Activated CD4-positive, alpha-beta T cell treated with anti-CD3 and anti-CD28 coated beads for 36 hours (primary cell): ENCODE measurements at regions of chr12 and their contacts with region 1.

Region 1: GRCh38 chr12:92065018-92065499 is 80.6 kb downstream of the BTG1 start:
- DNase-seq: peak; percentile 71
- ATAC-seq: peak; percentile 76
- H3K4me3 Mint-ChIP-seq: peak overlapping the region; percentile 30
- H3K27ac Mint-ChIP-seq: peak overlapping the region; percentile 89
- H3K4me1 Mint-ChIP-seq: peaks cover 57% of the 10 kb centered on the region
- H3K27me3 Mint-ChIP-seq: no peaks in the 10 kb centered on the region

Region 2: DNA sequence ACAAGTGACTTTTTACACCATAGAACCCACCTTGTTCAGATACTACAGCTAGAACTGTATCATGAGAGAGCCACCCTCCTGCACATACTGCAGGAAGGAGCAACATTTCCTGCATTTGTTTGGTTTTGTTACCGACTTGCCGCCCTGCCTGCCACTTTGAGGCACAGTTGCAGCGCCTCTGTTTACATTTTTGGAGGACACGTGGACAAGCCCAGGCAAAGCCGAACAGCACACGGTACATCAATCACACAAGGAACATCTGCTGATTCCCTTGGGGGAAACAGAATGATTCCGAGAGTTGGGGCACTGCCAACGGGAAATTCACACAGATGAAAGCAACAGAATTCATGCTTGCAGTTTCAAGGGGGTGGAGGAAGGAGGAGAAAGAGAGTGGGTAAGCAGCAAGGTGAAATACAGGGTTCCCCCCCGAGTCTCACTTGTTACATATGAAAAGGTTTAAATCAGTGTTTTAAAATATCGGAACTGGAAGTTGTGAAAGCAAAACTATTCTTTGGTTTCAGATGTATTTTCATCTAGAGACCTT is 30.1 kb before region 1 on chr12:
- CTCF ChIA-PET with region 1: no interaction called
- POLR2A ChIA-PET with region 1: no interaction called
- intact Hi-C with region 1: loop called in 1 of 2 experiments (anchors 2 kb)
- DNase-seq: peak; percentile 55
- ATAC-seq: peak; percentile 48
- H3K4me3 Mint-ChIP-seq: peak overlapping the region; percentile 72
- H3K27ac Mint-ChIP-seq: peak overlapping the region; percentile 92
- H3K4me1 Mint-ChIP-seq: peaks cover 83% of the 10 kb centered on the region
- H3K27me3 Mint-ChIP-seq: no peaks in the 10 kb centered on the region

Region 3: DNA sequence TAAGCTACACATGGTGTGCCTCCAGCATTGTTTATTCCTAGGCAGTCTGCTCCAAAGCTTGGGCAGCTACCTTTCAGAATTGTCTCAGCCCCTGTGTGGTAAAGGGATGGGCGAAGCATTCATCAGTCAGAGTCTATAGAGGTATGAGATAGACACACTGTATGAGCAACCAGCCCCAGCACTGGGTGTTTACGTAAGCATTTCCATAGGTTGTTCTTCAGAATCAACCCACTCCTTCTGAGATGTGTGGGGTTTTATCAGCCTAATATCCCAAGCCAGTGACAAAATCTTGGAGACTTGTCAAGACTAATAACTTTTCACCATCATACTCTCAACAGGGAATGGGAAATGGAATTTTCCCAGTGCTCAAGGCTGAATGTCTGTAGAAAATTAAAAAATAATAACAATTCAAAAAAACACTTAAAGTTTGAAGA is 17.6 kb before region 1 on chr12:
- CTCF ChIA-PET with region 1: interaction called, 3 read pairs
- POLR2A ChIA-PET with region 1: no interaction called
- intact Hi-C with region 1: loop called (anchors 1 to 2 kb)
- DNase-seq: peak; percentile 54
- ATAC-seq: peak; percentile 80
- H3K4me3 Mint-ChIP-seq: peak overlapping the region; percentile 41
- H3K27ac Mint-ChIP-seq: peak overlapping the region; percentile 86
- H3K4me1 Mint-ChIP-seq: peaks cover 85% of the 10 kb centered on the region
- H3K27me3 Mint-ChIP-seq: no peaks in the 10 kb centered on the region

Region 4: GRCh38 chr12:92078167-92079053 is 13.4 kb after region 1 on chr12:
- CTCF ChIA-PET with region 1: interaction called, 5 read pairs
- POLR2A ChIA-PET with region 1: no interaction called
- intact Hi-C with region 1: loop called (anchors 1 kb)
- DNase-seq: peak; percentile 38
- ATAC-seq: peak; percentile 87
- H3K4me3 Mint-ChIP-seq: no peak overlapping the region
- H3K27ac Mint-ChIP-seq: peak overlapping the region; percentile 87
- H3K4me1 Mint-ChIP-seq: peaks cover 79% of the 10 kb centered on the region
- H3K27me3 Mint-ChIP-seq: no peaks in the 10 kb centered on the region

Region 5: DNA sequence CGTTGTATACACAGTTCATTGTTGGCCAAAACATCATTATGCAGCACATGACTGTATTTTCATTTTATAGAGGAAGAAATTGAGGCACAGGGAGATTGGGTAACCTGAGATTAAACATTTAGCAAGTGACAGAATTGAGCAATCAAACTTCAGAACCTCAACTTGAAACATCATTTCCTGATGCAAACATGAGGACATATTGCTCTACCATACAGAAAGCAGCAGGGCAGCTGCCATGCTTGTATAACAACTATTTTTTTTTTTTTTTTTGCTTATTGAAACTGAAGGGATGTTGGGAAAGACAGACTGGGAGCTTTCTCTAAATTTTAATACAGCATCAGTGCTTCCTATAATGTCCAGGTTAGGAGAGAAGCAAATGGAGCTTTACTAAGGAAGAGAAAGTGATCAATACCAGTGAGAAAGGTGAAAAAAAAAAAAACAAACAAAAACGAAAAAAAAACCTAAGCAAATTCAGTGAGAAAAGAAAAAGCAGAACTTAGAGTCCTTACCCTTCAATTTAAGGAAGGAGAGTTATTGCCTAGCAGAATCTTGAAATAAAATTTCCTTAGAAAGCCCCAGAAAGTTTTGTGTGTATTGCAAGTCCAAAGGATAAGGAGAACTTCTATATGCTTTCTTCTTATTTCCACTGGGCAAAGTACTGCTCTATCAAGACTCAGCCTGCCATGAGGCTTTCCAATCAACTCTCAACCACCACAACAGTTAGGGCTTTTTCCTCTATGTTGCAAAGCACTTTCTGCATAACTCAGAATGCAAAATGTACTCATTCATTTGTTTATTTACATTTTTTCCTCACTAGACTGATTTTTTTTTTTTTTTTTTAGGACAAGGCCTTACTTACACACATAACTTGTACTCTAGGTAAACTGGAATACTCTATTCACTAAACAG is 59.0 kb after region 1 on chr12:
- CTCF ChIA-PET with region 1: no interaction called
- POLR2A ChIA-PET with region 1: no interaction called
- intact Hi-C with region 1: no loop called
- DNase-seq: no peak
- ATAC-seq: peak; percentile 45
- H3K4me3 Mint-ChIP-seq: peak overlapping the region; percentile 27
- H3K27ac Mint-ChIP-seq: peak overlapping the region; percentile 90
- H3K4me1 Mint-ChIP-seq: peaks cover 67% of the 10 kb centered on the region
- H3K27me3 Mint-ChIP-seq: no peaks in the 10 kb centered on the region

Region 6: GRCh38 chr12:92208613-92209121 is 143.6 kb after region 1 on chr12:
- CTCF ChIA-PET with region 1: no interaction called
- POLR2A ChIA-PET with region 1: no interaction called
- intact Hi-C with region 1: loop called in 1 of 2 experiments (anchors 10 kb)
- DNase-seq: peak; percentile 40
- ATAC-seq: peak; percentile 77
- H3K4me3 Mint-ChIP-seq: peak overlapping the region; percentile 67
- H3K27ac Mint-ChIP-seq: peak overlapping the region; percentile 81
- H3K4me1 Mint-ChIP-seq: peaks cover 32% of the 10 kb centered on the region
- H3K27me3 Mint-ChIP-seq: no peaks in the 10 kb centered on the region

Region 7: DNA sequence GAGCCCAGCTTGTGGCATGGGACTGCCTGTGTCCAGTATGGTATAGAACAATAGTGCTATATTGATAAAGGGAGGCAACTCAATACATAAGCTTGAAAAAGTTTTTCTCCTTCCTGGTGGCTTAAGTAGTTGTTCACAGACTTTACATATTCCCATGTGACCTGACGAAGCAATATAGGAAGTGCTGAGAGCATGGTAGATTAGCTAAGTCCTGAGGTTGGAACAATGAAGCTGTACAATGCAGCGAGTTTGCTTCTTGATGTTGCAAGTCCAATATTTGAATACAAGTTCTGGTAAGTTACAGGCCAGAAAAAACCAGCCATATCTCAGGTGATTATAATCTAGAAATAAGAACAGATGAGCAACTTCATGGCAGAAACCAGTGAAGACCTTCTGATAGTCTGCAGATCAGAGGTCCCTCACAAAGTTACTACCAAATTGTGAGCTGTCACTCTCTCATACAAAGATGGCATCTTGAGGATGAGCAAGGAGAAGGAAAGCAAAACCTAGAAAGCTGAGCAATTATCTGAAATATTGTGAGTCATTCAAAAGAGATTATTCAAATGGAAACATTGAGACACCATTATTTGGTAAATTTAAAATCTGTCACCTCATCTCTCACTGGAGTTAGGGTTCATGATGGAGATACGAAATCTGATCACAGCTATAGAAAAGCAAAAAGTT is 153.5 kb after region 1 on chr12:
- CTCF ChIA-PET with region 1: no interaction called
- POLR2A ChIA-PET with region 1: no interaction called
- intact Hi-C with region 1: loop called (anchors 1 to 10 kb)
- DNase-seq: no peak
- ATAC-seq: peak; percentile 96
- H3K4me3 Mint-ChIP-seq: peak overlapping the region; percentile 20
- H3K27ac Mint-ChIP-seq: peak overlapping the region; percentile 84
- H3K4me1 Mint-ChIP-seq: peaks cover 24% of the 10 kb centered on the region
- H3K27me3 Mint-ChIP-seq: no peaks in the 10 kb centered on the region

Region 8: DNA sequence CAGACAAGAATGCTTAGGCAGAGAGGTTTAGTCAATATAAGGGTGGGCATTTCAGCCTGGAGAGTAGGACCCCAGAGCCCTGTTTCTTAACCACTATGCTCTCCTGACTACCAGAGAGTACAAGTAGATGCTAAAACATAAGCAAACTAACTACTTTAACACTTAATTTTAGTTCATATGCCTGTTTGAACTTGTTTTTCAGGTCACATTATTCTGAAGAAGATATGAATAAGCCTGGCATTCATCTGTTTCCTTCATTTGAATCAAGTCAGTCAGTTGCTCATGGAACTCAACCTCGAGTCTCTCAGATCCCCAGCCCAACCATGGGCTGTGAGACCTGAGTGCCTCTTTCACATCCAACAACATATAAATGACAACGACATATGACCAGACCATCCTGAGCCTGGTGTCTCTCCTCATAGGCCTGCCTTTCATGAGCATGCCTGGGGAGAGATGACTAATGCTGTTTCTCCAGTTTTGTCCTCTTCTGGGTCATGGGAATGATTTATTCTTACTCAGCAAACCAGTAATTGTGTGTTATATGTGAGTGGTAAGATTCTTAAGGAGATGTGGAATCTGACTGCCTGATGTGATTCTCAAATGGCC is 331.7 kb after region 1 on chr12:
- CTCF ChIA-PET with region 1: no interaction called
- POLR2A ChIA-PET with region 1: no interaction called
- intact Hi-C with region 1: loop called in 1 of 2 experiments (anchors 5 kb)
- DNase-seq: peak; percentile 46
- ATAC-seq: peak; percentile 44
- H3K4me3 Mint-ChIP-seq: no peak overlapping the region
- H3K27ac Mint-ChIP-seq: peak overlapping the region; percentile 95
- H3K4me1 Mint-ChIP-seq: peaks cover 93% of the 10 kb centered on the region
- H3K27me3 Mint-ChIP-seq: no peaks in the 10 kb centered on the region

Region 9: DNA sequence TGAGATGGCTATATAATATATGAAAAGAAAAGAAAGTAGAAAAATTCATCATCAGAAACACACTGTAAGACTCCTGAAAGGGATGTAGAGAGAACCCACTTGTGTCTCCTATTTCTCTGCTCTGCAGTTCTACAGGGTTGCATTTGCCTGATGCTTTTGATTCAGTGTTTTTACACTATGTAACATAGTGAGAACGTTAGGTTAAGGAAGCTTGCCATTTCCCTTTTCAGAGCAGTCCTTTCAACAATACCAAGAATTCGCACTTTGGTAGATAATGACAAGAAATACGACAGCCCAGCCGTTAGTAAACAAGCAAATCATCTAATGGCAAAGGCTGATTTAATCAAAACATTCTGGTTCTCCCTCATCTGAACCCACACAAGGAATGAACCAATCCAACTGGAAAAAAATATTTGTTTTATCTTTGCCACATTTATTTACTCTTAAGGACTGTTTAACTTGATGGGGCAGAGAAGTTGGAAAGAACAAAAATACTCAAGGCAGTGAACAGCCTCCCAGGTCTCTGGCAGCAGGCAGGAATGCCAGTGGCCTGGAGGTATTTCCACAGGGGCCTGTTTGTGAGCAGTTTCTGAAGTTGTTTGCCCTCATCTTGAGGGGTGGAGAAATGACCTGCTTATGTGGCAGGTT is 1476.6 kb after region 1 on chr12:
- CTCF ChIA-PET with region 1: no interaction called
- POLR2A ChIA-PET with region 1: no interaction called
- intact Hi-C with region 1: no loop called
- DNase-seq: no peak
- ATAC-seq: no peak
- H3K4me3 Mint-ChIP-seq: no peak overlapping the region
- H3K27ac Mint-ChIP-seq: no peak overlapping the region
- H3K4me1 Mint-ChIP-seq: peaks cover 9% of the 10 kb centered on the region
- H3K27me3 Mint-ChIP-seq: no peaks in the 10 kb centered on the region